Lower leg skin (tissue), 4 donors: ENCODE measurements at regions of chr5 and their contacts with region 1.

Region 1: DNA sequence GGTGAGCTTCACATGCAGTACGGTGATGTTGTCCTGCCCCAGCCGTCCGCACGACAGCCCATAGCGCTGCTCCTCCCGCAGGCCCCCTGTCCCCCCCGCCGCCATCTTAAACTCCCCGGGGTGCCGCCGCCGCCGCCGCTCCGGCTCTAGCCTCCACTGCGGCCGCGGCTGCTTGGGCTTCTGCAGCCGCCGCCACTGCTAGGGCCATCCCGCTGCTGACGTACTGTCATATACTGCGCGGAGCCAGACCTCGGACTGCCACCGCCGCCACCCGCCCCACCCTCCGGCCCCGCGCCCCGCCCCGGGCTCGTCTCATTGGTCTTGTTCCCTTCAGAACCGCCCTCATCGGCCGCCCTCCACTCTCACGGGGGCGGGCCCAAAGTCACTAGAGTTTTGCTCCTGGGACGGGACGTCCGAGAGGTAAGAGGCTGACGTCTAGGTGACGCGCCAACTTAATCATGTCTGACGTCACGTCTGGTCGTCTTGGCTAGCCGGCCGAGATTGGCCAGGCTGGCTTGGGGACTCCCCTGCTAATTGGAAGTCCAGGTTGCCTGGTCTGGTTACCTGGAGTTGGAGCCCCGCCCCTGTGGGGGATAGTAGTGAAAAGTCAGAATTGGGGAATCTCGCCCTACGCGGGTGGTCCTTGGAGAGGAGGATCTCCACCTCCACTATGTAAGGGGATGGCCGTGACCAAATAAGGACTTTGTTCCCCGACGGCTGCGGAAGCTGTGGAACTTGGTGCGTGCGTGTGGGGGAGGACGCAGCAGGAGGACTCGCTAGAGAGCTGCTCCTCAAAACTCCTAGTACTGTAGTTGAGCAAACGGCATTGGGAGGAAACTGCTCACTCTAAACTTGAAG is at the start of gene ELL2:
- DNase-seq: peak; percentile 98 to 100
- H3K4me3 ChIP-seq: peak within 1 kb of the TSS; percentile 86
- CTCF ChIP-seq: no peak
- POLR2A ChIP-seq: peak in 1 of 2 donors; percentile 89
- total RNA-seq, gene ELL2: 32.4 to 50.3 (median 45.1) TPM

Region 2: GRCh38 chr5:96146675-96147074 is 184.8 kb after region 1 on chr5:
- intact Hi-C with region 1: no loop called
- DNase-seq: no peak
- H3K4me3 ChIP-seq: no peak overlapping the region
- CTCF ChIP-seq: no peak
- POLR2A ChIP-seq: no peak

Region 3: DNA sequence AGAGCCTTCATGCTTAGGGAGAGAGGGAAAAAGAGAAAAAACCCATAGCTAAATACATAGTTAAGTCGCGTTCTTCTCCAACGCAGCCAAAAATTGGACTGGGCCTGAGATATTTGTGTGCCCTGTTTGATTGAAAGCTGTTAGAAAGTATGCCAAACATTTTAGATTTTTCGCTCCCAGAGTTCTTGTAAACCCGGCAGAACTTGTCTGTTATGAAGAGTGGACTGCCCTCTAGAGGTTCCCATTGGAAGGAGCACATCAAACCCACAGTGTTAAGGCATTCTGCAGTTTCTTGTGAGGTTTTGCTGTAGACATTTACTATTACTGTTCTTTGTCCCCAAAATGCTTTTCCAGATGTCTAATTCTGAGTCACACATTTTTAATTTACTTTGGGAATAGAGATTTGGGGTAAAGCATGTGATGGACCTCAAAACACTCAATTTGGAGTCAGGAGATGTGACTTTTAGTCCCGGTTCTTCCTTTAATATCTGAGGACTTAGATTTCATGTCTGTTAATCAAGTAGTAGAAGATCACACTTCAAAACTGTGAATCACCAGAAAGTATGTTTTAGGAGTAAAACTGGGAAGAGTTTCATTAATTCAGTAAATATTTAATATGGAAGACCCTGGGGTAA is 374.6 kb after region 1 on chr5:
- intact Hi-C with region 1: loop called (anchors 10 kb)
- DNase-seq: peak in 1 of 2 donors; percentile 84
- H3K4me3 ChIP-seq: no peak overlapping the region
- CTCF ChIP-seq: peak in 1 of 3 donors; percentile 46
- POLR2A ChIP-seq: no peak

Region 4: GRCh38 chr5:97488126-97488668 is 1526.4 kb after region 1 on chr5:
- intact Hi-C with region 1: no loop called
- DNase-seq: no peak
- H3K4me3 ChIP-seq: no peak overlapping the region
- CTCF ChIP-seq: no peak
- POLR2A ChIP-seq: no peak